ENCODE measurements at regions of chr6 and their contacts with region 1.

Region 1: GRCh38 chr6:137744877-137745276 is 122.2 kb upstream of the TNFAIP3 start:
- DNase-seq: peak; percentile 75
- ATAC-seq: peak; percentile 79
- H3K4me3 ChIP-seq: peak overlapping the region; percentile 29; the same call in 1 of the 2 replicates
- H3K27ac ChIP-seq: peak overlapping the region; percentile 34; the same call in 1 of the 2 replicates
- H3K4me1 ChIP-seq: peaks cover 36% of the 10 kb centered on the region
- H3K27me3 ChIP-seq: no peaks in the 10 kb centered on the region
- CTCF ChIP-seq: no peak
- EP300 ChIP-seq: peak; percentile 25 to 28; a peak in 2 of 4 replicates
- POLR2A ChIP-seq: no peak
- RAD21 ChIP-seq: no peak

Region 2: DNA sequence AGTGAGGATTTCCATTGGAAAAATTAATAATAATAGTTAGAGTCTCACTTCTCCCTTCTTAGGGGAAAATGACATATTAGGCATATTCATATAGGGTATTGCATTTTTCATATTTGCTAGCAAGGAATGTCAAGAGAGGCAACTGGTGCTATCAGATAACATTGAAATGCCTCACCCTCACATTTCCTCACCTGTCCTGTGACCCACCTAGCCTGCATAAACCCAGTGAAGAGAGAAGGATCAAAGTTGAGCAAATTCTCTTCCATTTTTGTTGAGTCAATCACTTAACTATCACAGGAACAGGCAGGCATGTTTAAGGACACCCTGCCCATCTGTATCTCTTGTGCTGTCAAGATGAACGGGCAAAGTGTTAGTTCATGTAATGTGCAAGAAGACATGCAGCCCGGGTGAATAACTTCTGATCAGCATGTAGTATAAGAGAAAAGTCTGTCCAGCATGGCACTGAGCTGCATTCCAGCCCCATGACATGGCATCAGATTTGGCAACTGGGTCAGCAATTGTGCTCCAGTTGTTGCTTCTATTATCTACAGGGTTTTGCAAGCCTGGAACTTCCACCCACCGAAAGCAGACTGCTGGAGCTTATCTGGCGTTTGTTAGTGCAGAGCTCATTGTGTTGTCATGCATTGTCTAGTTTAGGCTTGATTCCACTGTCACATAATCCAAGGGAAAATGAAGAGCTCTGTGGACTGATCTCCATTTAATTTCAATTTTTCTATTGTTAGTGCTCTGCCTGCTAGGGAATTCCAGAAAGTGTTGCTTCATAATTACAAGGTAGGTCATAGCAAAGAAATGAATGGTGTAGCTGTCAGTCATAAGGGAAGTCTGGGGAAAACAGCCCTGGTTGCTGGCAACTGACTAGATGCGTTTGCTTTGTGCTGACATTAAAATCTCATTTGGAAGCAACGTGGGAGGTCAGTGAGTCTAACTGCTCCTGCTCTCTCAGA is 16.2 kb before region 1 on chr6:
- CTCF ChIA-PET with region 1: interaction called, 4 read pairs
- POLR2A ChIA-PET with region 1: interaction called, 4 read pairs
- RAD21 ChIA-PET with region 1: interaction called, 3 read pairs
- SMC1A ChIA-PET with region 1: interaction called, 12 read pairs
- in situ Hi-C with region 1: no loop called
- intact Hi-C with region 1: no loop called
- DNase-seq: no peak
- ATAC-seq: no peak
- H3K4me3 ChIP-seq: no peak overlapping the region
- H3K27ac ChIP-seq: no peak overlapping the region
- H3K4me1 ChIP-seq: no peaks in the 10 kb centered on the region
- H3K27me3 ChIP-seq: no peaks in the 10 kb centered on the region
- CTCF ChIP-seq: no peak
- EP300 ChIP-seq: no peak
- POLR2A ChIP-seq: no peak
- RAD21 ChIP-seq: no peak

Region 3: DNA sequence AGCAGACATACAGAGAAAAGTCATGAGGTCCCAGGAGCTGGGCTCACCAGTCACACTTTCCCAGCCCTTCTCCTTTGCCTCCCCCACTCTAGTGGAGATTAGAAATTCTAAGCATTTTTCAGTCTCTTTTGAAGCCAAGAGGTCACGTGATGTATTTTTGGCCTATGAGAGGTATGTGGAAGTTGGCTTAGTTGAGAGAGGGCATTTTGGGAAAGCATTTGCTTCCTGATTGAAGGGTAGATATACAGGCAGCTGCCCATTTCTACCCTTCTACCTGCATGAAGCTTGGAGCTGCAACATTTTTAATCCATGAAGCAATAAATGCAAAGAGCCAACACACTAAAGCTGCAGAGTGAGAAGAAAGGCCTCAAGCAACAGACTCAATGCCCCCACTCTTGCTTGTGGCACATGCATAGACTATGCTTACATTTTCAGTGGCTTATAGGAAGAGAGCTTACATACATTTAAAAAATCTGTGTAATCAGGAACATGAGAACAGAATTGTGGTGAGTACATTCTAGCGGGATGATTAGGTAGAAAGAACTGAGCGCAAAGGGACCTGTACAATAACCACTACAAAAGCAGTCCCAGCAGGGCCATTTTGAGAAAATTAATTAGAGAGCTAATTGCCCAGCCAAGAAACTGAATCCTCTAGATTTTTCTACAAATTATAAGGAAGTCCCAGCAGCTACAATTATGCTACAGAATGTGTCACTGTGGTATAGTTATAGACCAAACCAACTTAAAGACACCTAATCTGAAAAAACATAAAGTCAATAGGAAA is 16.4 kb after region 1 on chr6:
- CTCF ChIA-PET with region 1: interaction called, 6 read pairs
- POLR2A ChIA-PET with region 1: interaction called, 12 read pairs
- RAD21 ChIA-PET with region 1: interaction called, 7 read pairs
- SMC1A ChIA-PET with region 1: interaction called, 31 read pairs
- in situ Hi-C with region 1: no loop called
- intact Hi-C with region 1: no loop called
- DNase-seq: no peak
- ATAC-seq: no peak
- H3K4me3 ChIP-seq: no peak overlapping the region
- H3K27ac ChIP-seq: no peak overlapping the region
- H3K4me1 ChIP-seq: peaks cover 10% of the 10 kb centered on the region
- H3K27me3 ChIP-seq: no peaks in the 10 kb centered on the region
- CTCF ChIP-seq: no peak
- EP300 ChIP-seq: no peak
- POLR2A ChIP-seq: no peak
- RAD21 ChIP-seq: no peak

Region 4: GRCh38 chr6:137767911-137768690 is 23.2 kb after region 1 on chr6:
- CTCF ChIA-PET with region 1: no interaction called
- POLR2A ChIA-PET with region 1: interaction called, 6 read pairs
- RAD21 ChIA-PET with region 1: interaction called, 3 read pairs
- SMC1A ChIA-PET with region 1: interaction called, 31 read pairs
- in situ Hi-C with region 1: no loop called
- intact Hi-C with region 1: no loop called
- DNase-seq: peak; percentile 79
- ATAC-seq: peak; percentile 85
- H3K4me3 ChIP-seq: peak overlapping the region; percentile 13
- H3K27ac ChIP-seq: peak overlapping the region; percentile 92
- H3K4me1 ChIP-seq: peaks cover 26% of the 10 kb centered on the region
- H3K27me3 ChIP-seq: no peaks in the 10 kb centered on the region
- CTCF ChIP-seq: no peak
- EP300 ChIP-seq: peak; percentile 54 to 63; a peak in 3 of 4 replicates
- POLR2A ChIP-seq: no peak
- RAD21 ChIP-seq: no peak

Region 5: GRCh38 chr6:137811121-137811915 is 66.4 kb after region 1 on chr6:
- CTCF ChIA-PET with region 1: interaction called, 3 read pairs
- POLR2A ChIA-PET with region 1: interaction called, 3 read pairs
- RAD21 ChIA-PET with region 1: interaction called, 13 read pairs
- SMC1A ChIA-PET with region 1: interaction called, 17 read pairs
- in situ Hi-C with region 1: no loop called
- intact Hi-C with region 1: no loop called
- DNase-seq: peak; percentile 95
- ATAC-seq: peak; percentile 95
- H3K4me3 ChIP-seq: peak overlapping the region; percentile 20
- H3K27ac ChIP-seq: peak overlapping the region; percentile 89
- H3K4me1 ChIP-seq: peaks cover 31% of the 10 kb centered on the region
- H3K27me3 ChIP-seq: no peaks in the 10 kb centered on the region
- CTCF ChIP-seq: no peak
- EP300 ChIP-seq: peak in 1 of 2 experiments; percentile 72; a peak in 2 of 4 replicates
- POLR2A ChIP-seq: peak; percentile 88
- RAD21 ChIP-seq: no peak

Measured in GM12878 (cell line).